ENCODE measurements at regions of chr1 and their contacts with region 1.

Region 1: DNA sequence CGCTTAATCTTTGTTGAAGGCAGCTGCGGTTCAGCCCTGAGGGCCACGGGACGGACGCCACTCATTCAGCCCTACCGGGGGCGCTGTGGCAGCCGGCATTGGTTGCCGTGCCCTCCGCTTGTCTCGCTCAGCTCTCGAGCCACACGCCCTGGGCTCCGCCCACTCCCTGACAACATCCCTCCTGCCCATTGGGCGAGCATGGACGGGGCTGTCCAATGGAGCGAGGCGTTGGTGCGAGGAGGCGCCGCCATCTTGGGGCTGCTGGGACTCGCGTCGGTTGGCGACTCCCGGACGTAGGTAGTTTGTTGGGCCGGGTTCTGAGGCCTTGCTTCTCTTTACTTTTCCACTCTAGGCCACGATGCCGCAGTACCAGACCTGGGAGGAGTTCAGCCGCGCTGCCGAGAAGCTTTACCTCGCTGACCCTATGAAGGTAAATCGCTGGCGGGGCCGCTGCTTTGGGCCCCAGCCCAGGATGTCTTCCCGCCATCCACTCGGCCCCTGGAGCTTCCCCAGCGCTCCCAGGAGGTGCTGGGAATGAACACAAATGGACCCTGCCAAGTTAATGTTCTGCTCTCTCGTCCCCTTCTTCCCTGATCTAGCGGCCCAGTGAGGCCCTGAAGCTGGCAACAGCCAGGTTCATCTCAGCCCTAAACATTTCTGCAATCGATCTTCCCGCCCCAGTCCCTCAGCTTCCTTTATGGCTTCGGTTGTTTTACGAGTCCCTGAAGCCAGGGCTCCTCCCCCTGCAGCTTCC is at the start of gene SRP9:
- DNase-seq: peak; percentile 99
- ATAC-seq: peak; percentile 100
- total RNA-seq, gene SRP9: 151 TPM

Region 2: DNA sequence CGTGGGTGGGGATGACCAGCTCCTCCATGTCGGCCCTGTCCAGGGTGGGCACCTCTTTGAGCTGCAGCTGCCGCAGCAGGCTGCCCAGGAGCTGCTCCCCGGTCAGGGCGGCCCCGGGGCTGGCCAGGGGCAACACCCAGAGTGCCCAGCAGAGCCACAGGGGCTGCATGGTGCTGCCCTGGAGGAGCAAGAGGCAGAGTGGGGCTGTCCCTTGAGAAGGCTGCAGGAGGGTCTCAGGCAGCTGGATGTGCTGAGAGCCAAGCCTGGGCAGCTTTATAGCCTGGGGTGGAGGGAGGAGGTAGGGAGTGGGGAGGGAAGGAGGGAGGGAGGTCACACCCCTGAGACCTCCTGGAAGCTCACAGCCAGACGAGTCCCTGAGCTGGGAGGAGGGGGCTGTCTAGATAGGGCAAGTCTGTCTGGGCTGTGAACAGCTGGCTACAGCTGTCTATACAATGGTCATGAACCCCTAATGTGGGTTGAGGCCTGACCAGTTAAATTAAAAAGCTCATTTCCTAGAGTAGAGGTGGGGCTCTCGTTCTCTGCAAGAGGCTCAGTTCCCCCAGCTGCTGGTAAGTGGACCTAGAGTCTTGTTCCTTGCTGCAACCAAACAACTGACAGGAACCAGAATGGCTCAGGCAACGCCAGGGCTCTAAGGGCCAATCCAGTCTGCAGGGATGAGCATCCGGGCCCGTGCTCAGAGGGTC is 111.3 kb after region 1 on chr1 and contains the start of gene LEFTY1:
- intact Hi-C with region 1: no loop called
- DNase-seq: no peak
- ATAC-seq: no peak
- total RNA-seq, gene LEFTY1: 0.89 TPM

Region 3: GRCh38 chr1:225911191-225912130 is 133.7 kb after region 1 on chr1:
- intact Hi-C with region 1: loop called (anchors 1 kb)
- DNase-seq: peak; percentile 81
- ATAC-seq: peak; percentile 92

Measured in sciatic nerve (tissue), 2 donors.